CD4-positive, alpha-beta T cell (primary cell): ENCODE measurements at regions of chrX and their contacts with region 1.

Region 1: DNA sequence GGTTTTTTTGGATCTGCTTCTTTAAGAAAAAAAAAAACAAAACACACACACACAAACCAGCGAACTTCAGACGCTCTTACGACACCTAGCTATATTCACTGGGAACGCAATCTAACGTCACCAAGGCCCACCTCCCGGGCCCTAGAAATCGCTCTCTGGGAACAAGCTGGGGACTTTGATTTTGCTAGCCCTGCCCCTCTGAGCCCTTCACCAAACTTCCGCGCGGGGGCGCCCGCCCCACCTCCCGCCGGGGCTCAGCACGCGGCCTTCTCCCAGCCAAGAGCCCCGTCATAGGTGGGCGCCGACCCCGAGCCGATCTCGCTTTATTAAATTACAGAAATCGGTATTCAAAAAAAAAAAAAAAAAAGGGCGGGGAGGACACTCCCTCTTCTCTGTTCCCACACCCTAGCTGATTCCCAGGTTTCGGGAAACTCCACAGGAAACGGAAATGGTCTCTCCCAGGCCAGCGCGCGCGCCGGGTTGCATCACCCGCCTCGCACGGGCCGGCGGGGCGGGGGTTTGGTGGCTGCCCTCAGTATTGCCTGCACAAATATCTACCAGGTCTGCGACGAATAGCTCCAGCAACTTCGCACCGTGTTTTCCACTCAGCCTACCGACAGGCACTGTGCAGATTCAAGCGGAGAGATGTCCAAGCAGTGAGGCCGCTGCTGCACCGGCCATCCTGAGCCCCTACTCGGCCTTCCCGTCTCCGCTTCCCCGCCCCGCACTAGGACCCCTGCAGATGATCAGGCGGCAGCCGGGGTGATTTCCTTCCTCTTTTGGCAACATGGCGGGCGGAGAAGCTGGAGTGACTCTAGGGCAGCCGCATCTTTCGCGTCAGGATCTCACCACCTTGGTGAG is at the start of gene EIF2S3:
- DNase-seq: peak; percentile 72 to 94 (median 83)
- ATAC-seq: peak; percentile 86
- H3K4me3 ChIP-seq: peak within 1 kb of the TSS; percentile 95
- H3K4me3 Mint-ChIP-seq: no peak within 1 kb of the TSS
- H3K27ac ChIP-seq: peak within 1 kb of the TSS; percentile 89 to 95
- H3K27ac Mint-ChIP-seq: no peak within 1 kb of the TSS
- H3K4me1 ChIP-seq: peaks cover 5% of the 10 kb centered on the region
- H3K4me1 Mint-ChIP-seq: peaks cover 17% of the 10 kb centered on the region
- H3K27me3 ChIP-seq: no peaks in the 10 kb centered on the region
- H3K27me3 Mint-ChIP-seq: no peaks in the 10 kb centered on the region
- CTCF ChIP-seq: peak; percentile 58
- total RNA-seq, gene EIF2S3: 197 to 202 TPM

Region 2: GRCh38 chrX:23673108-23673507 is 381.3 kb before region 1 on chrX:
- CTCF ChIA-PET with region 1: no interaction called
- POLR2A ChIA-PET with region 1: no interaction called
- intact Hi-C with region 1: loop called in 1 of 2 experiments (anchors 5 kb)
- DNase-seq: no peak
- ATAC-seq: no peak
- H3K4me3 ChIP-seq: no peak overlapping the region
- H3K4me3 Mint-ChIP-seq: no peak overlapping the region
- H3K27ac ChIP-seq: no peak overlapping the region
- H3K27ac Mint-ChIP-seq: no peak overlapping the region
- H3K4me1 ChIP-seq: no peaks in the 10 kb centered on the region
- H3K4me1 Mint-ChIP-seq: peaks cover 6% of the 10 kb centered on the region
- H3K27me3 ChIP-seq: no peaks in the 10 kb centered on the region
- H3K27me3 Mint-ChIP-seq: no peaks in the 10 kb centered on the region
- CTCF ChIP-seq: no peak

Region 3: GRCh38 chrX:23773601-23774175 is 280.7 kb before region 1 on chrX:
- CTCF ChIA-PET with region 1: interaction called, 4 read pairs
- POLR2A ChIA-PET with region 1: no interaction called
- intact Hi-C with region 1: loop called in 1 of 2 experiments (anchors 10 kb)
- DNase-seq: peak in 12 of 14 experiments; percentile 9 to 88 (median 39)
- ATAC-seq: peak; percentile 99
- H3K4me3 ChIP-seq: peak overlapping the region; percentile 37
- H3K4me3 Mint-ChIP-seq: peak overlapping the region; percentile 59
- H3K27ac ChIP-seq: peak overlapping the region; percentile 67 to 91
- H3K27ac Mint-ChIP-seq: peak overlapping the region; percentile 94
- H3K4me1 ChIP-seq: peaks cover 11% of the 10 kb centered on the region
- H3K4me1 Mint-ChIP-seq: peaks cover 9% of the 10 kb centered on the region
- H3K27me3 ChIP-seq: no peaks in the 10 kb centered on the region
- H3K27me3 Mint-ChIP-seq: no peaks in the 10 kb centered on the region
- CTCF ChIP-seq: no peak

Region 4: GRCh38 chrX:23901805-23902204 is 152.6 kb before region 1 on chrX:
- CTCF ChIA-PET with region 1: interaction called, 43 read pairs
- POLR2A ChIA-PET with region 1: interaction called, 60 read pairs
- intact Hi-C with region 1: no loop called
- DNase-seq: peak in 9 of 14 experiments; percentile 4 to 75 (median 30)
- ATAC-seq: peak; percentile 80
- H3K4me3 ChIP-seq: no peak overlapping the region
- H3K4me3 Mint-ChIP-seq: no peak overlapping the region
- H3K27ac ChIP-seq: no peak overlapping the region
- H3K27ac Mint-ChIP-seq: no peak overlapping the region
- H3K4me1 ChIP-seq: no peaks in the 10 kb centered on the region
- H3K4me1 Mint-ChIP-seq: peaks cover 4% of the 10 kb centered on the region
- H3K27me3 ChIP-seq: no peaks in the 10 kb centered on the region
- H3K27me3 Mint-ChIP-seq: no peaks in the 10 kb centered on the region
- CTCF ChIP-seq: no peak

Region 5: DNA sequence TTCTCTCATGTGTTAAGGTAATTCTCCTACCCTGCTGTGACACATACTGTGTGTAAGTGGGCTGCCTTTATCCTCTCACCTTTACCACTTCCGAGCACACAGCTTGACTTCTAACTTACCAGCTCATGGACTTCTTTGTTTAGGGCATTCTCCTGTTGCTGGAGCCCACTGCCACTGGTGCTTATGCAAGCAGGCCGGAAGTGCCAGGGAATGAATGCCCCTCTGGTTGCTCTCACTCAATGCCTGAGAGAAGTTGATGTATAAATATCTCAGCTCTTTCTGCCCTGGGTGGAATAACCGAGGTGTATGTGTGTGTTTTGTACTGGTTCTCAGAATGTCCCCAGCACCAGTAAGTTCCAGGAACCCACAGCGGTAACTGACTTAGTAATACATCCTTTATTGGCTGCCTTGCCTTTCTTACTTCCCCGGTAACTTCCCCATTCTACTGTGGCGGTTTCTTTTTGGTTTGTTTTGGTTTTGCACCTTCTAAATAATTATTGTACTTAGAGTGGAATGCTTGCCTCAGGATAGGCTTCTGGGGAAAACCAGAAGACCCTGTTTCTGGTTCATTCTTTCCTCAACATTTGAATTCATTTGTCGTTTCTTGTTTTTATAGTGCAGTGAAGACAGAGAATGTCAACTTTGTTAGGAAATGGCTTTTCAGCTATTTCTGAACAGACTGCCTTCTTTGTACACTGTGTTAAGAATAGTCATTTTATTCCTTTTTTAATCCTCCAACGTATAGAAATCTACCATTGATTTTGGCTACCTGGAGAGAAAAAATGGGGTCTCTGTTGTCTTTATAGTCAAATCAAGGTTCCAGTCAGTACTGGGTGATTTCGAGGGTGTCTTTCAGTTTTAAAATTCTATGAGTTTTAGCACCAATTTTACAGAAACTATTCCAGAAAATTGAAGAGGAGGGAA is 101.2 kb before region 1 on chrX:
- CTCF ChIA-PET with region 1: interaction called, 4 read pairs
- POLR2A ChIA-PET with region 1: interaction called, 15 read pairs
- intact Hi-C with region 1: no loop called
- DNase-seq: peak; percentile 0 to 75 (median 24)
- ATAC-seq: peak; percentile 82
- H3K4me3 ChIP-seq: peak overlapping the region; percentile 55
- H3K4me3 Mint-ChIP-seq: peak overlapping the region; percentile 89
- H3K27ac ChIP-seq: peak overlapping the region; percentile 60 to 64
- H3K27ac Mint-ChIP-seq: peak overlapping the region; percentile 89
- H3K4me1 ChIP-seq: peaks cover 8% of the 10 kb centered on the region
- H3K4me1 Mint-ChIP-seq: peaks cover 11% of the 10 kb centered on the region
- H3K27me3 ChIP-seq: no peaks in the 10 kb centered on the region
- H3K27me3 Mint-ChIP-seq: no peaks in the 10 kb centered on the region
- CTCF ChIP-seq: no peak

Region 6: DNA sequence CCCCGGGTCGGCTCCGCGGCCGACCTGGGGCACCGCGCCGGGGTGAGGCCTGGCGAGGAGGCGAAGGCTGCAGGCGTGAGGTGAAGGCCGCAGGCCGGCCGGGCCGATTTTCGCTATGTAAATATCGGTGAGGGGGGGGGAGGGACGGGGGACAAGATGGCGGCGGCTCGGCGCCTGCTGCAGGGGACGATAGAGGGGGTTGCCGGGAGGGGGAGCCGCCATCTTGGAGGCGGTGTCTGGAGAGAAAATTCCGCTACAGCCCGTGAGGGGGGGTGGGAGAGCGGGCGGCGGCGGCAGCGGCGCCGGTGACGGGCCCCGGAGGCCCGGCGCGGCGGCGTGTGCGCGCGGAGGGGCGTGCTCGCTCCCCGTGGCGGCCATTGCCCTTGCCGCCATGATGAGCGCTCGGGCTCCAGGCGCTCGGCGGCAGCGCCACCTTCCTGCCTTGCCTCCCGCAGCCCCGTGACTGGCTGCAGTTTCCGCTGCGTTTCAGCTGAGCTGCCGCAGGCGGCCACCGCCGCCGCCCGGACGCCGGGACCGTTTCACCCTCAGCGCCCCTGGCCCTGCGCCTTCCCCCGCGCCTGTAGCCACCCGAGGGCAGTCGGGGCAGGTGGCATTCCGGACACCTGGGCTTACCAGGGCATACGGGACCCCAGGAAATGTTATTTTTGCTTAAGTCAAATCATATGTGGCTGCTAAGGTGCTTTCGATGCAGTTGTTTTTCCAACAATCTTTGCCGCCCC is 95.8 kb after region 1 on chrX:
- CTCF ChIA-PET with region 1: interaction called, 27 read pairs
- POLR2A ChIA-PET with region 1: interaction called, 30 read pairs
- intact Hi-C with region 1: loop called (anchors 2 to 10 kb)
- DNase-seq: peak; percentile 64 to 94 (median 83)
- ATAC-seq: peak; percentile 74
- H3K4me3 ChIP-seq: peak overlapping the region; percentile 74
- H3K4me3 Mint-ChIP-seq: peak overlapping the region; percentile 94
- H3K27ac ChIP-seq: peak overlapping the region; percentile 79 to 80
- H3K27ac Mint-ChIP-seq: peak overlapping the region; percentile 90
- H3K4me1 ChIP-seq: peaks cover 33% of the 10 kb centered on the region
- H3K4me1 Mint-ChIP-seq: peaks cover 73% of the 10 kb centered on the region
- H3K27me3 ChIP-seq: no peaks in the 10 kb centered on the region
- H3K27me3 Mint-ChIP-seq: no peaks in the 10 kb centered on the region
- CTCF ChIP-seq: peak; percentile 43